Lower leg skin (tissue), 4 donors: ENCODE measurements at regions of chr22 and their contacts with region 1.

Region 1: GRCh38 chr22:20418211-20418788 is 19.3 kb downstream of the SCARF2 start:
- DNase-seq: peak; percentile 73 to 96
- H3K4me3 ChIP-seq: no peak overlapping the region
- CTCF ChIP-seq: no peak
- POLR2A ChIP-seq: no peak

Region 2: DNA sequence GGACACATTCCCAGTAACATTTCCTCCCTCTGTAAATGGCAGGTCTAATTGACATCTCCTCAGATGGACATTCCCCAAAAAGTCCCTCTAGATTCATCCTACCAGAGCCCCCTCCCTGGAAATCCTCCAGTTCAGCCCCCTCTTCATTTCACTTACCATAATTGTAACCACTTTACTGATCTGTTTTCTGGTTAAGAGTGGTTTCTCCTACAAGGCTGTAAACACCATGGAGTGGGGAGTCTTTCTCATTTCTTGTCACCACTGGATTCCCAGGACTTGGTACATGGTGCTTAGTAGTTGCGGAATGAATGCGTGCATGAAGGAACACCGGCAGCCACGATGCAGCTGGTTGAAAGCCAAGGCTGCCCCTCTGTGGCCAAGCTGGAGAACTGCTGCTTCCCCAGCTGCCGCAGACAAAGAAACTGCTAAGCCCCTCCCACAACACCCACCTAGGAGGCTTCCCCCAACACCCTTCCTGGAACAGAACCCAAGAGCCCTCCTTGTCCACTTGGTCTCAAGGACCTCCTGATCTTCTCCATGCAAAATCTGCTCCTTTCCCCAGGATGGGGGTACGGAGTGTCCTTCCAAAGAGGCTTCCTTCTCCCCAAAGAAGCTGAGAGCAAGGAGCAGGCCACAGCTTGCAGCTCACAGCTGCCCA is 37.9 kb after region 1 on chr22:
- intact Hi-C with region 1: loop called (anchors 5 kb)
- DNase-seq: peak; percentile 58 to 94
- H3K4me3 ChIP-seq: no peak overlapping the region
- CTCF ChIP-seq: peak in 1 of 3 donors; percentile 76
- POLR2A ChIP-seq: no peak

Region 3: GRCh38 chr22:21867528-21868266 is 1449.4 kb after region 1 on chr22 and contains the start of gene MAPK1:
- intact Hi-C with region 1: no loop called
- DNase-seq: peak; percentile 88 to 98
- H3K4me3 ChIP-seq: peak within 1 kb of the TSS; percentile 94
- CTCF ChIP-seq: no peak
- POLR2A ChIP-seq: no peak
- total RNA-seq, gene MAPK1: 72.3 to 121 (median 85.2) TPM